Activated naive CD4-positive, alpha-beta T cell treated with anti-CD3 and anti-CD28 coated beads for 36 hours (primary cell): ENCODE measurements at regions of chr10 and their contacts with region 1.

Region 1: GRCh38 chr10:111076191-111076681 is 593 bp upstream of the ADRA2A start:
- DNase-seq: peak; percentile 68
- H3K4me3 Mint-ChIP-seq: peak overlapping the region; percentile 71
- H3K27ac Mint-ChIP-seq: no peak overlapping the region
- H3K4me1 Mint-ChIP-seq: peaks cover 11% of the 10 kb centered on the region
- H3K27me3 Mint-ChIP-seq: peaks cover 55% of the 10 kb centered on the region

Region 2: GRCh38 chr10:110803830-110804338 is 272.4 kb before region 1 on chr10:
- CTCF ChIA-PET with region 1: no interaction called
- intact Hi-C with region 1: loop called (anchors 5 kb)
- DNase-seq: peak; percentile 59
- H3K4me3 Mint-ChIP-seq: no peak overlapping the region
- H3K27ac Mint-ChIP-seq: peak overlapping the region; percentile 47
- H3K4me1 Mint-ChIP-seq: peaks cover 34% of the 10 kb centered on the region
- H3K27me3 Mint-ChIP-seq: no peaks in the 10 kb centered on the region

Region 3: DNA sequence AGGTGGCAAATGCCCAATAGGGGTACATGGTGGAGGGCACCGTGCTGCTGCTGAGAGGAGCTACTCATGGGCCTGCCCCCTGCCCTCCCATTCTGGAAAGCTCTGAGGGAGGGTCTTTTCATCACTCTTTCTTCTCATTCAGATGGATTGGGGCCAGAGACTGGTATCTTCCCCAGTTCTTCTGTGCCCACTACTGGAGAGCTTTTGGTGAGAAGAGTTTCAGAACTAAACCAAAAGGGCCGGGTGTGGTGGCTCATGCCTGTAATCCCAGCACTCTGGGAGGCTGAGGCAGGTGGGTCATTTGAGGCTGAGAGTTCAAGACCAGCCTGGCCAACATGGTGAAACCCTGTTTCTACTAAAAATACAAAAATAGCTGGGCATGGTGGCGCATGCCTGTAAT is 13.1 kb after region 1 on chr10:
- CTCF ChIA-PET with region 1: interaction called, 11 read pairs
- intact Hi-C with region 1: no loop called
- DNase-seq: no peak
- H3K4me3 Mint-ChIP-seq: no peak overlapping the region
- H3K27ac Mint-ChIP-seq: no peak overlapping the region
- H3K4me1 Mint-ChIP-seq: no peaks in the 10 kb centered on the region
- H3K27me3 Mint-ChIP-seq: peaks cover 2% of the 10 kb centered on the region

Region 4: DNA sequence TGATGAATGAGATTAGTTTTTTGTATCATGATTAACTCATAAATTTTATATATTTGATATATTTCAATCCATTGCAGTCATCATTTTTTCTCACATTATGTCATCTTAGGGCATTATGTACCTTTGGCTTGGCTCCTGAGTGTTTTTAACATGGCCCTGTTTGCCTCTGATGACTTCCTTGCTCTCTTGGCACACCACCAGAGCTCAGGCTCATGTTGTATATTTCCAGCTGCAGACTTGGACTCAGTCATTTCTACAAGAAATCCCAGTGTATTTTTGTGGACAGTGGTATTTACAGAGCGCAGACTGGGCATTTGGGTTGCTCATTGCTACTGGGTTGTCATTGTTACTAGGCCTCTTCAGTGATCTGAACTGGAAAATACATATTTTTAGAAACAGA is 189.1 kb after region 1 on chr10:
- CTCF ChIA-PET with region 1: interaction called, 7 read pairs
- intact Hi-C with region 1: loop called (anchors 5 kb)
- DNase-seq: no peak
- H3K4me3 Mint-ChIP-seq: no peak overlapping the region
- H3K27ac Mint-ChIP-seq: no peak overlapping the region
- H3K4me1 Mint-ChIP-seq: no peaks in the 10 kb centered on the region
- H3K27me3 Mint-ChIP-seq: peaks cover 19% of the 10 kb centered on the region

Region 5: DNA sequence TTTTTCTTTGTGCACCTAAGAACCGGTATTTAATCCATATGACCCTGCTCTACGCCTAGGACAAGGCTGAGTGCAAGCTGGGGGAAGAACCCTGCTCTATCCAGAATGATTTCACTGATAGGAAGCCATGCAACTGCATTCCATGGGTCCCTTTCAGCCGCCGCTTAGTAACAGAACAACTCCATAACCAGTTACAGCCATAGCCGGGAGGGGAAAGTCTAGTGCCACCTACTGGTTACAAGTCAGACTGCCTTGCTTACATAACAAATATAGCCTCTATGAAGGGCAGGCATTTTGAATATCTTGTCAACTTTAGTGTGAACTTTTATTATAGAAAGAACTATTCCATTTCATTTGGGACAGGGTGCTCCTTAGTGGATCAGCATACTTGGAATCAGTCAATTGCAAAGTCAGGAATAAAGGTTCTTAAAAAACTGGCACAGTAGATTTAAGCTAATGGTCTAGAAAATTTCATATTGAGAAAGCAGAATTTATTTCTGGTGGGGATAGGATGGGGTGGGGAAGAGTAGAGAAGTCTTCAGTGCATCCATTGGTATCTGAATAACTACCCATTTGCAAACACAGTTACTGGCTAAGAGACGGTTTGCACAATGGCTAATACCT is 522.3 kb after region 1 on chr10:
- CTCF ChIA-PET with region 1: interaction called, 10 read pairs
- intact Hi-C with region 1: no loop called
- DNase-seq: peak; percentile 70
- H3K4me3 Mint-ChIP-seq: no peak overlapping the region
- H3K27ac Mint-ChIP-seq: no peak overlapping the region
- H3K4me1 Mint-ChIP-seq: no peaks in the 10 kb centered on the region
- H3K27me3 Mint-ChIP-seq: no peaks in the 10 kb centered on the region

Region 6: DNA sequence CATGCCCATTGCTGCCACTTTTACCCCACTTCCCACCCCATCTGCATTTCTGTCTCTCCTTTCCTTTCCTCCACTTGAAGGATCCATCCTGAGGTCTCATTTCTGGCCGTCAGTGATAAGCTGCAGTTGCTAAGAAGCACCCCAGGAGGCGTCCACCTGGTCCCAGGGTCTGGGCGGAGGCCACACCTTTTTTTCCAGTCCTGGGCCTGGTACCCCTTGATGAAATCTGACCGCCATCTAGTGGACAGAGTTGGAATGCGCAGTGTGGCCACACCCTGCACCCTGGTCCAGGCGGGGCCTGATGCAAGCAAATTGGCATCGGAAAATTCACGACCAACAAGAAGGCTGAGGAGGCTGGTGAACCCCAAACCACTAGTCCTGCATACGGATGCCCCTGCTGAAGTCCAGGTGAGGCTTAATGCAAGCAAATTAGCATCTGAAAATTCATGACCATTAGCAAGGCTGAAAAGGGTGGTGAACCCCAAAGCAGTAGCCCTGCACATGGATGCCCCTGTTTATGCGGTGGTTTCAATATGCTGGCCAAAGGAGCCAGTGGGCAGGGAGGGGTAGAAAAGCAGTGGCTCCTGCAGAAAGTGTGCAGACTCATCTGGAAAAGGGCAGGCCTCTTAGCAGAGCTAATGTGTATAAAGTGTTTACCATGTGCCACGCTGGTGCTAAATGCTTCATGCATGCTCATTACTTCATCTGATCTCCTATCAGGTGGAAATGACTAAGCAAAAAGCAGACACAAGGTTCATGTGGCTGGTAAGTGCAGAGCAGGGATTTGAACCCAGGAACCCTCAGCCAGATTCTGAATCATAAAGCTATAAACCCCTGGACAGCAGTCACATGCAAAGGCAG is 1064.1 kb after region 1 on chr10:
- CTCF ChIA-PET with region 1: interaction called, 4 read pairs
- intact Hi-C with region 1: loop called (anchors 2 kb)
- DNase-seq: peak; percentile 87
- H3K4me3 Mint-ChIP-seq: no peak overlapping the region
- H3K27ac Mint-ChIP-seq: peak overlapping the region; percentile 61
- H3K4me1 Mint-ChIP-seq: no peaks in the 10 kb centered on the region
- H3K27me3 Mint-ChIP-seq: peaks cover 4% of the 10 kb centered on the region